AG04449 (cell line): ENCODE measurements at regions of chr1 and their contacts with region 1.

Region 1: DNA sequence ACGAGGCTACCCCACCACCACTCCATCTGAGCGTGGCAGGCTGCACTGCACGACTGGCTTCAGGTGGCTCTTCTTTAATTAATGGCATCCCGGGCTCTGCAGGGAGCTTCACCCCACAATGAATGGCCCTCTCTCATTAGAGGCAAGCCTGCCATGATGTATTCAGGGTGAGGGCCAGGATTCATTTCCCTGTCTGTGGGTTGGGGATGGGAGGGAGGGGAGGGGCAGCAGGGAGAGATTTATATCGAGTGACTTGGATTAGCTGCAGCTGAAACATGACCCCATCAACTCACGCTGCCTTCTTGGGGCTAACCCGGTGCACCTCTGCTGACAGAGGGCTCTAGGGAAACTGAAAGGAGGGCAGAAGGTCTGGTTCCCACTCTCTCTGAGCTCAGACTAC is 54.2 kb downstream of the ERI3 start:
- DNase-seq: no peak
- H3K4me3 ChIP-seq: no peak overlapping the region
- CTCF ChIP-seq: no peak

Region 2: DNA sequence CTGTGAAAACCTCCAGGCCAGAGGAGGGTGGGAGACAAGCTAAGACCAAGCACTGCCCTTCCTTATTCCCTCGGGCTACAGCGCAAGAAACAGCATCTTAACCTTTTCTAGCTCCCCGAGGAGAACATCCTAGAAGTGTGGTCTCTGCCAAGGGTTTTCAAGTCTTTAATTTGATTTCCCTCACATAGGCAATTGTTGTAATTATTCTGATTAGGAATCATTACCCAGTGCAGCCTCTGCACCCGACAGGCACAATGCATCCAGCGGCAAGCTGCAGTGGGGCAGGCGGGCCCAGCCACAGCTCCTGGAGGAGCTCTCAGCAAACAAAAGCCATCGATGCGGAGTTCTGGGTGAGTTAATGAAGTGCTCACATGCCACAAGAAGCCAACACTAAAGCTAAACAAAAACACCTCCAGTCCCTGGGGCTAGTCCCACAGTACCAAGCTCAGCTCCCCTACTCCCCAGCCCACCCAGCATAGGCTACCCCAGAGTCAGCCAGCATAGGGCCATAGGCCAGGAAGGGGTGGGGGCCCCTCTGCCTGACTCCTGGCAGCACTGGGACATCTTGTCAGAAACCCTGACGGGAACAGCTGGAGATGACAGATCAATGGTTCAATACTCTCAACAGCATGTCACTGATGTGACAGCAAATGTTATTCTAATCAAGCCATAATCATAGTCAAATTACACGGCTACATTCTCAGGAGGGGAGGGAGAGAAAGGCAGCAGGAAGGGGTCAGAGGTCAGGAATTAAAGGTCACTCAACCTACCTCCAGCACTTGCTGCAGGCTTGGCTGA is 11.7 kb after region 1 on chr1:
- CTCF ChIA-PET with region 1: interaction called, 18 read pairs
- POLR2A ChIA-PET with region 1: no interaction called
- DNase-seq: no peak
- H3K4me3 ChIP-seq: no peak overlapping the region
- CTCF ChIP-seq: no peak